BJ (cell line): ENCODE measurements at regions of chr4 and their contacts with region 1.

Region 1: DNA sequence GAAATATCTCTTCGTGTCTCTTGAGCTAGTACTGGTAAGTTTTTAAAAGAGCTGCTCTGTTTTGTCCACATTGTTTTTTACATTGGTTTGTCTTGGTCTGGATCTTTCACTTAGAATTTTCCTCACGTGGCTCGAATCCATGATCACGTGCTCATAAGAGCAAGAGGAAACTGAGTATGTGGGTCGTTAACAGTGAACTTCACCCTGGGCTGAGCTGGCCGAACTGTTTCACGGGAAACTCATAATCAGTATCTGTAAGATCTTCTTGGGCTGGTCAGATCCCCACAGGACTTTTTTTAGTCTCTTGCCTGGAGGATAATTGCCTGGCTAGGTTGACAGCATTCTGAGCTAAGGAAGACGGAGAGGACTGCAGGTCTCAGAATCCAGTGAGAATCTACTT is 77.8 kb upstream of the HELT start:
- DNase-seq: no peak
- H3K4me3 ChIP-seq: no peak overlapping the region
- H3K27me3 ChIP-seq: no peaks in the 10 kb centered on the region
- CTCF ChIP-seq: no peak

Region 2: DNA sequence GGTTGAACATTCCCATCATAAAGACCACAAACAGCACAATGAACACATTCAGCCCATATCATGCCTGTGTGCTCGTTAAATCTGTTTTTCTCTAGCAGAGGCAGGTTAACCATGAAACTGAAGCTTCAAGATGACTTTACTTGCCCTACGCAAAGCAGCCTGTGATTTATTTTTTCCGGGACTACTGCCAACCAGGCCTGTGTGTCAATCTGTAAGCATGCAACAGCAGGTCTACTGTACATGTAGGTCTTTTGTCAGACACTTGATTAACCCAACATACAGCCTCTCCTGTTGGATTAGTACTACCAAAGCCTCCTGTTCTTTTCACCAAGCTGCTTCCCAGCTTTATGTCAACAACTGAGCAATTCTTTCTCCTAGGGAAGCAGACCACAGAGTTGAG is 29.2 kb before region 1 on chr4:
- CTCF ChIA-PET with region 1: no interaction called
- POLR2A ChIA-PET with region 1: interaction called, 14 read pairs
- DNase-seq: no peak
- H3K4me3 ChIP-seq: no peak overlapping the region
- H3K27me3 ChIP-seq: no peaks in the 10 kb centered on the region
- CTCF ChIP-seq: no peak

Region 3: GRCh38 chr4:184930026-184930425 is 10.5 kb before region 1 on chr4:
- CTCF ChIA-PET with region 1: no interaction called
- POLR2A ChIA-PET with region 1: no interaction called
- DNase-seq: no peak
- H3K4me3 ChIP-seq: no peak overlapping the region
- H3K27me3 ChIP-seq: no peaks in the 10 kb centered on the region
- CTCF ChIP-seq: no peak

Region 4: DNA sequence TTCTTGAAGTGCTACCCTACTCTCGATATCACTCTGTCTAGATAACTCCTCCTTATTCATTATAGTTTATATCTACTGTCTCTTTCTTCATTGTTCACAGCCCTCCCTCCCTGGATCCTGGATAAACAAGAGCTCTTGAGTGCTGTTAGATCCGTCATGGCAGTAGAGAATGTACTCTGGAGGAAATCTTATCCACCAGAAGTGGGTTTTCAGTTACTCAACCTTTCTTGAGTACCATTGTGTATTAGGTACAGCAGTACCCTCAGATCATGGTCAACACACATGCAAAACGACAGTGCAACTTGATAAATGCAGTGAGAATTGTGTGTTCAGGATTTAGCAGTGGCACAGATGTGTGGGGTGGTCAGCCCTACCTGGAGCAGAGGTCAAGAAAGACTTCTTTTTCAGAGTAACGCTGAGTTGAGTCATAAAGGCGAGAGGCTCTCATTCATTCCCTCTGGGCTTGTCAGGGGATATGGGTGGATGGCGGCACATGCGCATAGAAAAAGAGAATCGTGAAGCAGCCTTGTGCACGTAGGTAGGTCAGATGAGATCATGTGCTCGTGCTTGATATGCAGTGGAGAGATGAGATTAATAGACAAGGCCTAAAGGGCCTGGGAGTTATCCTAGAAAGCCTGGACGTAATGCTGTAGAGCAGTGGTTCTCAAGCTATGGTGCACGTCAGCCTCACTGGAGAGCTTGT is 358.4 kb after region 1 on chr4:
- CTCF ChIA-PET with region 1: no interaction called
- POLR2A ChIA-PET with region 1: no interaction called
- DNase-seq: no peak
- H3K4me3 ChIP-seq: no peak overlapping the region
- H3K27me3 ChIP-seq: no peaks in the 10 kb centered on the region
- CTCF ChIP-seq: no peak